ENCODE measurements at regions of chr1 and their contacts with region 1.

Region 1: GRCh38 chr1:204516180-204516879 is at the start of gene MDM4:
- DNase-seq: peak; percentile 97
- ATAC-seq: peak; percentile 78
- H3K4me3 ChIP-seq: peak within 1 kb of the TSS; percentile 75 to 96 (median 91)
- H3K4me3 Mint-ChIP-seq: no peak within 1 kb of the TSS
- H3K27ac ChIP-seq: peak within 1 kb of the TSS; percentile 95 to 97
- H3K27ac Mint-ChIP-seq: no peak within 1 kb of the TSS
- H3K4me1 ChIP-seq: peaks cover 83 to 92% of the 10 kb centered on the region in 2 donors
- H3K4me1 Mint-ChIP-seq: peaks cover 68% of the 10 kb centered on the region
- H3K27me3 ChIP-seq: no peaks in the 10 kb centered on the region
- H3K27me3 Mint-ChIP-seq: no peaks in the 10 kb centered on the region
- CTCF ChIP-seq: no peak
- total RNA-seq, gene MDM4: 374 and 378 TPM in 2 replicates

Region 2: DNA sequence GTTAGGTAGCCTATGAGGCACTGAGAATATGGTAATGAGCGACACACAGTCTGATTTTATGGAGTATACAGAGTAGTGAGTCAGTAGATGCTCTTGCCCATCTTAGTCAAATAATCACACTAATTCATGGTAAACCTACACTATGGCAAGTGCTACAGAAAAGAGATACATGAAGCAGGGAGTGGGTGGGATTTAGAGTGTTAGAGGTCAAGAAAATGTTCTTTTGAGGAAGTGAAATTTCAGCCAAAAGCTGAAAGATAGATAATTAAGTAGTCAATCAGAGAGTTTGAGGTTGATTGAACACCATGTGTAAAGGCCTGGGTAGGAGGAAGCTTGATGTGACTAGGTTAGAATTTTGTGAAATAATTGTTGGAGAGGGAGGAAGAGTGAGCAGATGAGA is 14.6 kb after region 1 on chr1:
- CTCF ChIA-PET with region 1: interaction called, 25 read pairs
- POLR2A ChIA-PET with region 1: interaction called, 7 read pairs
- intact Hi-C with region 1: no loop called
- DNase-seq: peak; percentile 44
- ATAC-seq: peak; percentile 63
- H3K4me3 ChIP-seq: no peak overlapping the region
- H3K4me3 Mint-ChIP-seq: peak overlapping the region; percentile 12
- H3K27ac ChIP-seq: peak overlapping the region; percentile 17 to 67
- H3K27ac Mint-ChIP-seq: peak overlapping the region; percentile 62
- H3K4me1 ChIP-seq: peaks cover 13 to 21% of the 10 kb centered on the region in 2 donors
- H3K4me1 Mint-ChIP-seq: peaks cover 21% of the 10 kb centered on the region
- H3K27me3 ChIP-seq: no peaks in the 10 kb centered on the region
- H3K27me3 Mint-ChIP-seq: no peaks in the 10 kb centered on the region
- CTCF ChIP-seq: no peak

Region 3: DNA sequence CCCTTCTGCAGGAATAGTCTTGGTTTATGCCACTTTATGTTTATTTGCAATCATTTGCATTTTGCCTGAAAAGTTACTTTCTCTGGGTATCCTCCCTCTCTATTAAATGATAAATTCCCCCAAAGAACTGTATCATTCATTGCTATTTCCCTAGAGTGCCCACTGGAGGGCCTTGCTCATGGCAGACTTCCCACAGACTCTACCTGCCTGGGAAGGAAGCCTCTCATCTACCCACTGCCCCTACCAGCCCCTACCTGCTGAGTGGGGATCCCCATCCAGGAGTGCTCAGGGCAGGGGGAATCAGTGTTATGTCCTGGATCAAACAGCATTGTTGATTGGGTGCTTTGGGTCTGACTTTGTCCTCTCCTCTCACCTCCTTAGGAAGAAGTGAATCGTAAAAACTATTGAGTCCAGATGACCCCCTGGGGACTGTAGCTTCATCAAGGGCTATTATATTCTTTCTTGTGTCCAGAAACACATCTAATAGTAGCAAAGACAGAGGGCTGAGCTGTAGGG is 176.1 kb after region 1 on chr1:
- CTCF ChIA-PET with region 1: no interaction called
- POLR2A ChIA-PET with region 1: no interaction called
- intact Hi-C with region 1: no loop called
- DNase-seq: no peak
- ATAC-seq: no peak
- H3K4me3 ChIP-seq: no peak overlapping the region
- H3K4me3 Mint-ChIP-seq: no peak overlapping the region
- H3K27ac ChIP-seq: no peak overlapping the region
- H3K27ac Mint-ChIP-seq: no peak overlapping the region
- H3K4me1 ChIP-seq: no peaks in the 10 kb centered on the region
- H3K4me1 Mint-ChIP-seq: no peaks in the 10 kb centered on the region
- H3K27me3 ChIP-seq: peaks cover 0 to 14% (median 4%) of the 10 kb centered on the region in 4 experiments
- H3K27me3 Mint-ChIP-seq: peaks cover 50% of the 10 kb centered on the region
- CTCF ChIP-seq: no peak

Region 4: DNA sequence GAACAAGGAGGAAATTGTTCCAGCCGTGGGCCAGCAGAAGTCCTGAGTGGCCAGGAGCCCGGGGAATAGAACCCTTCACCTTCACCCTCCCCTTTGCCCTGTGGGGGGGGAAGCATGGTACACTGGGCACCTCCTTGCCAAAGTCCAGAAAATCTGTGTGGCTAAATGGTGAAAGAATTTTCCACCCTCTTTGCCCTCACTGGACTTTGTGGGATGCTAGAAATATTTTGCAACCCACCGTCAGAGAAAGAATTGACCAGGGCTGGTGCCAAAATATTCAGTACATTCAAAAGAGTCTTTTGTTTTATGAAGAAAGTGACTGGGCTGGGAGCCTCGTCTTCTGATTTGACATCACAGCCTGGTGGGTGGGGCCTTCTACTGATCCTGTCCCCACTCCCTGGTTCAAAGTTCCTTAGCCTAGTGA is 369.0 kb after region 1 on chr1:
- CTCF ChIA-PET with region 1: no interaction called
- POLR2A ChIA-PET with region 1: no interaction called
- intact Hi-C with region 1: no loop called
- DNase-seq: no peak
- ATAC-seq: no peak
- H3K4me3 ChIP-seq: no peak overlapping the region
- H3K4me3 Mint-ChIP-seq: no peak overlapping the region
- H3K27ac ChIP-seq: no peak overlapping the region
- H3K27ac Mint-ChIP-seq: no peak overlapping the region
- H3K4me1 ChIP-seq: peaks cover 11% of the 10 kb centered on the region in 2 donors
- H3K4me1 Mint-ChIP-seq: peaks cover 9% of the 10 kb centered on the region
- H3K27me3 ChIP-seq: no peaks in the 10 kb centered on the region
- H3K27me3 Mint-ChIP-seq: peaks cover 13% of the 10 kb centered on the region
- CTCF ChIP-seq: no peak

Region 5: DNA sequence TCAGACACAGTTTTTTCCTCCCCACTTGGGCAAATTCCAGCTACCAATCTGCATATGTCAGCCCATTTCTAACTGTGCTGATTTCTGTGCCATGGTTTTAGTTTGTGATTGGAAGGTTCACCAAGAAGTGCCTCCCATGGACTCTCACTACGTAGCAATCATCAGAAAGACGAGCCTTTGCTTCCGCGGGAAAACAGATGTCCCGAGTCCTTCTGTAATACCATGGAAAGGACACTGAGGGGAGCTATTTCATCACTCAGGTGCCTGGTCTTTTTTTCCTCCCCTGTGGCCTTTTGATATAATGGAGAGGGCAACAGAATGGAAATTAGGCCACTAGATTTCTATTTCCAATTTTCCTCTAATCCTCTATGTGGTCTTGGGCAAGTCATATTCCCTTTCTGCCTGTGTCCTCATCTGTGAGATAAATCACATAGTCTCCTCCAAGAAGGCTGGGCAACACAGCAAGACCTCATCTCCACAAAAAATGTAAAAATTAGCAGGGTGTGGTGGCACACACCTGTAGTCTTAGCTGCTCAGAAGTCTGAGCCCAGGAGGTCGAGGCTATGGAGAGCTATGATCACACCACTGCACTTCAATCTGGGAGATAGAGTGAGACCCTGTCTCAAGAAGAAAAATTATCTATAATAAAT is 880.8 kb after region 1 on chr1:
- CTCF ChIA-PET with region 1: no interaction called
- POLR2A ChIA-PET with region 1: no interaction called
- intact Hi-C with region 1: no loop called
- DNase-seq: peak; percentile 65
- ATAC-seq: peak; percentile 47
- H3K4me3 ChIP-seq: no peak overlapping the region
- H3K4me3 Mint-ChIP-seq: no peak overlapping the region
- H3K27ac ChIP-seq: no peak overlapping the region
- H3K27ac Mint-ChIP-seq: no peak overlapping the region
- H3K4me1 ChIP-seq: peaks cover 0 to 2% of the 10 kb centered on the region in 2 donors
- H3K4me1 Mint-ChIP-seq: no peaks in the 10 kb centered on the region
- H3K27me3 ChIP-seq: peaks cover 0 to 7% (median 0%) of the 10 kb centered on the region in 4 experiments
- H3K27me3 Mint-ChIP-seq: peaks cover 18% of the 10 kb centered on the region
- CTCF ChIP-seq: peak; percentile 79

Measured in B cell (primary cell).